Ovary (tissue), 10 donors: ENCODE measurements at regions of chr2 and their contacts with region 1.

Region 1: GRCh38 chr2:163278166-163278565 is 439.6 kb upstream of the KCNH7 start:
- DNase-seq: no peak
- H3K4me3 ChIP-seq: no peak overlapping the region
- H3K27ac ChIP-seq: no peak overlapping the region
- H3K4me1 ChIP-seq: no peaks in the 10 kb centered on the region
- H3K27me3 ChIP-seq: no peaks in the 10 kb centered on the region
- CTCF ChIP-seq: no peak
- EP300 ChIP-seq: no peak
- POLR2A ChIP-seq: no peak

Region 2: DNA sequence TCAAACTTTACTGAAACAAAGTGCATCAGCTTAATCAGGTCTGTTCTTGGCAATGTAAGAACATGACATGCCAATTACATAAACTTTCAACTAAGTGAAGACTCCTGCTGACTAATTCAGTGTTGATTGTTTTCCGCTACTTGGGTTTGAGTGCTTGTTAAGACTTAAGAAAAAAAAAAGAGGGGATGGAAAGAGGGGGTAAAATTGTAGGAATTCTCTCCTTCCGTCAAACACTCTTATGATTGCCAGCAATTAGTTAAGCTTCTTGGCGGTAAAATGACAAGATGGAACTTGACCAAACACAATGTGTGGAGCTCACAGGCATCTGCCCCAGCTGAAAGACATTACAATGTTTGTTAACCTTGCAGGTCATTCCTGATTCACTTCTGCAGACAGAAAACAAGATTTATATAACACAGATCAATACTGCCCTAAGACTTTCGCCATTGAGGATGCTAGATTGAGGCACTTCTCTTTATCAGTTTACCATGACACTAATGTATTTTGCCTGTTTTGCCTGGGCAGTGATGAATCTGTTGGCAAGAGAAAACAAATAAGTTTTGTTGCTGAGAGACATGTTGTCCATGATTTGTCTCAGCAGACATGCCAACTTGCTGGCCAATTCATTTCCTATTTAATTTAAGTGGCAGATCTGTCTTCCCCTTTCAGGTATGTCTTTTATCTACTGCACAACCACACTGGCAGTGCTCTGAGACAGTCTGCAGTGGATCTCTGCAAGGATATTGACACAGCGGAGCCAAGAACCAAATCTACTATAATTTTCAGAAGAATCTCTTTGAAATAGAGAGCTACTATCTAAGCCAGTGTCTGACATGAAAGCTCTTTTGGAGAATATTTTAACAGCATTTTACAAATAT is 29.6 kb before region 1 on chr2:
- intact Hi-C with region 1: loop called in 1 of 4 experiments (anchors 1 kb)
- DNase-seq: no peak
- H3K4me3 ChIP-seq: no peak overlapping the region
- H3K27ac ChIP-seq: no peak overlapping the region
- H3K4me1 ChIP-seq: no peaks in the 10 kb centered on the region
- H3K27me3 ChIP-seq: no peaks in the 10 kb centered on the region
- CTCF ChIP-seq: no peak
- EP300 ChIP-seq: no peak
- POLR2A ChIP-seq: no peak

Region 3: DNA sequence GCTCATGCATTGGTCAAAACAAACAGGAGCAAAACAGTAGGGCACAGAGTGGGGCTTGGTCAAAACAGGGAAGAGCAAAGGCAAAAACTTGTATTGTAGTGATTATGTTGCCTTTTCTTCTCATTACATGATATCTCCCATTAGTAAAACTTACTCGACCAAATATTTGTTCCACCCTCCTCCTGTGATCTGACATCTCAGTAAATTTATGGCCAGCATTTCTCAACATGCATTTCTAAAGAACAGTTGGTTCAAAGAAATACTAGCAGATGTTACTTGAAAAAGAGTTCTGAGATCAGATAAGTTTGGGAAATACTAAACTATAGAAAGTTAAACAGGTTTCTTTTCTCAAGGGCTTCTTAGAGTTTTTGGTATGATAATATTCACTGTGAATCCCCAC is 34.5 kb after region 1 on chr2:
- intact Hi-C with region 1: no loop called
- DNase-seq: no peak
- H3K4me3 ChIP-seq: no peak overlapping the region
- H3K27ac ChIP-seq: no peak overlapping the region
- H3K4me1 ChIP-seq: no peaks in the 10 kb centered on the region
- H3K27me3 ChIP-seq: no peaks in the 10 kb centered on the region
- CTCF ChIP-seq: no peak
- EP300 ChIP-seq: no peak
- POLR2A ChIP-seq: no peak

Region 4: DNA sequence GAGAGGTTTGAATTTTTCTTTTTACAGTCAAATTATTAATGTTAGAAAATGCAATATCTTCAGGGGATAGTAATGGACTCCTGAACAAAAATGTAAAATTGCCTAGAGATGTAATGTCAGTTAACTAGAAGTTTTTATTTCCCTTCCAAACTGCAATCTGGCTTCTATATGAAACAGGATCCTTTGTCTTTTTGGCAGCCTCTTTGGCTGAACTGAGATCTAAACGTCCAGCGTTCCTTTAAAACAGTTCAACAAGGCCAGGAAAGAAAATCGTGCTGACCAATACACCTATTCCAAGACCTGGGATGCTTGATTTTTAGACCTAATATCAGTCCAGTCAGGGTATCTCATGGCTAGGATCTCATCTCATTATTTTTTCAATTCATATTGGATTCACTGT is 212.1 kb after region 1 on chr2:
- intact Hi-C with region 1: no loop called
- DNase-seq: no peak
- H3K4me3 ChIP-seq: no peak overlapping the region
- H3K27ac ChIP-seq: no peak overlapping the region
- H3K4me1 ChIP-seq: no peaks in the 10 kb centered on the region
- H3K27me3 ChIP-seq: no peaks in the 10 kb centered on the region
- CTCF ChIP-seq: no peak
- EP300 ChIP-seq: no peak
- POLR2A ChIP-seq: no peak